ENCODE measurements at regions of chr12 and their contacts with region 1.

Region 1: GRCh38 chr12:10153271-10154144 is 18.4 kb downstream of the OLR1 start:
- DNase-seq: peak; percentile 51 to 67
- ATAC-seq: peak; percentile 91

Region 2: DNA sequence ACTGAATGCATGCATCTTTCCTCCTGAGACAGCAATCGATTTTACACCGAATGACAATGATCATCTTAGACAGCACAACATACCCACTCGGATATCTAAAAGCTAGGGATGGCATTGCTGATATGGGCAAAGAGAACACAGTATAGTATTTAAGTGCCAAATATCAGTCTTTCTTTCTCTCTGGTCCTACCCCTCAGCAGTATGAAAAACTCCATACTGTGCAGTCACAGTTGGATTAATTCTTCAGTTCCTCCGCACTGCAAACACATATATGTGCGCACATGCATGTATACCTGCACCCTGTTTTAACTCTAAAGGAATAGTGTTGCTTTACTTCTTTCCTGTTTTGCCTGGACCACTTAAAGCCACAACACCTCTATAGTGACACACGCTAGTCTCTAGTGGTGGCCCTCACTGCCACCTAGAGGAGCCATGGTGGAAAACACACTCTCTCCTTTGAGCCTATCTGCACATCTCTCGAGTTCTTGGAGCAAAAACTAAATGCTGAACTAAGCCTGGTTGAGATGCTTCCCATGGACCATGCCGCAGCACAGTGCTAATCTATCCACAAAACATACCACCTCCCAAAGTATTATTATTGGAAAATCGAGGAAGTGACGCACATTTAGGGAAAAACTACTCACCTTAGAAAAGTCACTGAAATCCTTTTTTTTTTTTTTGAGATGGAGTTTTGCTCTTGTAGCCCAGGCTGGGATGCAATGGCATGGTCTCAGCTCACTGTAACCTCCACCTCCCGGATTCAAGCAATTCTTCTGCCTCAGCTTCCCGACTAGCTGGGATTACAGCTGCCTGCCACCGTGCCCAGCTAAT is 37.3 kb after region 1 on chr12:
- intact Hi-C with region 1: loop called in 1 of 2 experiments (anchors 5 kb)
- DNase-seq: peak; percentile 33 to 62
- ATAC-seq: peak; percentile 98

Region 3: GRCh38 chr12:10227648-10228047 is 74.1 kb after region 1 on chr12:
- intact Hi-C with region 1: no loop called
- DNase-seq: no peak
- ATAC-seq: no peak

Measured in left colon (tissue), 2 donors.